Posterior vena cava (tissue), 2 donors: ENCODE measurements at regions of chr20 and their contacts with region 1.

Region 1: GRCh38 chr20:64057628-64058498 is 5.1 kb upstream of the TCEA2 start:
- DNase-seq: peak; percentile 93

Region 2: GRCh38 chr20:62182613-62183425 is 1875.0 kb before region 1 on chr20 and contains the start of gene MTG2:
- intact Hi-C with region 1: loop called in 1 of 2 experiments (anchors 5 kb)
- DNase-seq: peak; percentile 98
- total RNA-seq, gene MTG2: 19.8 to 23.8 TPM

Region 3: GRCh38 chr20:64027981-64028685 is 29.7 kb before region 1 on chr20:
- intact Hi-C with region 1: loop called in 1 of 2 experiments (anchors 1 kb)
- DNase-seq: no peak